Right ventricle myocardium inferior (tissue), 1 donor: ENCODE measurements at regions of chr2 and their contacts with region 1.

Region 1: GRCh38 chr2:201231781-201232466 is 28.4 kb upstream of the CASP8 start:
- DNase-seq: peak; percentile 90
- ATAC-seq: peak; percentile 83

Region 2: GRCh38 chr2:200913654-200914053 is 318.3 kb before region 1 on chr2:
- intact Hi-C with region 1: no loop called
- DNase-seq: no peak
- ATAC-seq: no peak

Region 3: DNA sequence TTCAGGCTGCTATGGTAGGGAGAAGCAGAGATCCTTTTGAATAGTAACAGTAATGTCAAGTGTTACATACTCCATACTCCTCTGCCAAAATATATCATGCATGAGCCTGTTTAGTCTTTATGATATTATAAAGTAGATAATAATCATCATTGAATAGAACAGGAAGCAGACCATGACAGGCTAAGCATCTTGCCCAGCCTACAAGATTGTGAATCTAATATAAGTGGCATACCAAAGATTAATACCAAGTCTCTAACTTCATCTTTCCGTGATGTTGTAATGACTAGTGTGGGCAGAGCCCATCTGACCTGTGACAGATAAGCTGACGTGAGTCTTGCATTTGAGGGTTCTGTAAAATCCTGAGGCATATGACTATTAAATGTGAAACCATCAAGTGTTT is 147.1 kb before region 1 on chr2:
- intact Hi-C with region 1: no loop called
- DNase-seq: no peak
- ATAC-seq: no peak

Region 4: GRCh38 chr2:201118121-201118960 is 113.6 kb before region 1 on chr2:
- intact Hi-C with region 1: no loop called
- DNase-seq: peak; percentile 95
- ATAC-seq: peak; percentile 51

Region 5: DNA sequence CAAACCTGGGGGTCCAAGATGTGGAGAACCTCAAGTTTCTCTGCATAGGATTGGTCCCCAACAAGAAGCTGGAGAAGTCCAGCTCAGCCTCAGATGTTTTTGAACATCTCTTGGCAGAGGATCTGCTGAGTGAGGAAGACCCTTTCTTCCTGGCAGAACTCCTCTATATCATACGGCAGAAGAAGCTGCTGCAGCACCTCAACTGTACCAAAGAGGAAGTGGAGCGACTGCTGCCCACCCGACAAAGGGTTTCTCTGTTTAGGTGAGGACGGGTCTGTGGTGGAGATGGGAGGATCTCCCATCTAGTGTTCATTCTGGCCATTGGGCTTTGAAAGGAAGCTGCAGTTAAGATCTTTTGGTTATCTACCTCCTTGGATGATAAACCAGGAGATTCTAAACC is 46.1 kb before region 1 on chr2:
- intact Hi-C with region 1: loop called (anchors 2 kb)
- DNase-seq: no peak
- ATAC-seq: no peak

Region 6: GRCh38 chr2:201363857-201364560 is 132.1 kb after region 1 on chr2:
- intact Hi-C with region 1: loop called (anchors 5 kb)
- DNase-seq: no peak
- ATAC-seq: peak; percentile 60

Region 7: DNA sequence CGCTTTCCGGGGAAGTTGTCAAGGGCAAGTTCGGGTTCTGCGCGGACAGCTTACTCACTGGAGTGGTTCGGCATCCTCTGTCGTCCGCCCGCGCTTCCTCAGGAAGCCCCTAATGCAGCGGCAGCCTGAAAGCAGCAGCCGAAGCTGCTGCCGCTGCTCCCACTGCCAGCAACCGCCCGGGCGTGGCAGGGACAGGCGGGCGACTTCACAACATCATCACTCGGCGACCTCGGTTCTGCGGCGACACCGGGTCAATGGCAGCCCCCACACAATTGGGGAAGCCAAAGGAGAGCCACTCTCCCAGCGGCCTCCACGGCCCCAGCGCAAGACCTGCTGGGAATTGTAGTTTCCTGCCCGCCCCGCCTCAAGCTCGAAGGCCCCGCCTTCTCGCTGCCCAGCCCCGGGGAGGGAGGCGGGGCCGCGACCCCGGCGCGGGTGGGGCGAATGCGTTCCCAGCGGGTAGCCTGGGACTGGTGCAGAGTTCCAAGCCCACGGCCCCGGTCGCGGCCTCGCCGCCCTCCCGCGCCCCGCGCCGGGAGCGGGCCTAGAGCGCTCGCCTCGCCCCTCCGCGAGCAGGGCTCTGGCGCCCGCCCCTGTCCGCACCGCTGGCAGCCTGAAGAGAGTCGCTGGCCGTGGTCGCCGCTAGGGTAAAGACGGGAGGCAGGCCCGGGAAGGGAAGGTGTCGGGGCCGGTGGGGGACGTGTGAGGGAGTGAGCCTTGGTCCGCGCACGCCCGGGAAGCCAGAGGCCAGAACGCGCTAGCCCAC is 219.6 kb after region 1 on chr2 and contains the starts of genes STRADB and TRAK2:
- intact Hi-C with region 1: loop called (anchors 10 kb)
- DNase-seq: peak; percentile 97
- ATAC-seq: peak; percentile 98
- total RNA-seq, gene STRADB: 79.1 TPM
- total RNA-seq, gene TRAK2: 163 TPM

Region 8: DNA sequence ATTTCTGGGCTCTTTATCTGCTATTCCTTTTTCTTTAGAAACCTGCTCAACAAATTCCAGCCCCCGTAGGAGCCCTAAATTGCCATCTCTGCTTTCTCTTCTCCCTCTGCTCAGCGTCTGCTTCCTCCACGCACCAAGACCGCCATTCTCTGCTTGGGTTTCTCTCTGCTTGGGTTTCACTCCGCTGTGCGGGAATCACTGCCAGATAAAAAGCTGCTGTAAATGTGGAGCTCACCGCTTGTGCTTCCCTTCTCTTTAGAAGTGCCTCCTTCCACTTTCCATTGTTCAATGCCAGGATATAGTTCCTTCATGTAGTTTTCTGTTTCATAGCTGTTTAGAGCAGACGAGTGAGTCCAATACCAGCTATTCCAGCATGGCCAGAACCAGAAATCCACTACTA is 365.5 kb after region 1 on chr2:
- intact Hi-C with region 1: no loop called
- DNase-seq: no peak
- ATAC-seq: no peak

Region 9: GRCh38 chr2:201642579-201643215 is 410.8 kb after region 1 on chr2:
- intact Hi-C with region 1: loop called (anchors 10 kb)
- DNase-seq: peak; percentile 92
- ATAC-seq: peak; percentile 94